MCF 10A (cell line): ENCODE measurements at regions of chr1 and their contacts with region 1.

Region 1: GRCh38 chr1:236103646-236104218 is 38.6 kb upstream of the GPR137B start:
- DNase-seq: peak; percentile 82
- H3K4me3 Mint-ChIP-seq: no peak overlapping the region
- H3K27ac Mint-ChIP-seq: no peak overlapping the region
- H3K4me1 Mint-ChIP-seq: peaks cover 7% of the 10 kb centered on the region
- H3K27me3 Mint-ChIP-seq: no peaks in the 10 kb centered on the region
- CTCF ChIP-seq: peak; percentile 99

Region 2: GRCh38 chr1:236051242-236051791 is 52.4 kb before region 1 on chr1:
- CTCF ChIA-PET with region 1: no interaction called
- POLR2A ChIA-PET with region 1: no interaction called
- intact Hi-C with region 1: no loop called
- DNase-seq: no peak
- H3K4me3 Mint-ChIP-seq: no peak overlapping the region
- H3K27ac Mint-ChIP-seq: no peak overlapping the region
- H3K4me1 Mint-ChIP-seq: no peaks in the 10 kb centered on the region
- H3K27me3 Mint-ChIP-seq: no peaks in the 10 kb centered on the region
- CTCF ChIP-seq: no peak

Region 3: DNA sequence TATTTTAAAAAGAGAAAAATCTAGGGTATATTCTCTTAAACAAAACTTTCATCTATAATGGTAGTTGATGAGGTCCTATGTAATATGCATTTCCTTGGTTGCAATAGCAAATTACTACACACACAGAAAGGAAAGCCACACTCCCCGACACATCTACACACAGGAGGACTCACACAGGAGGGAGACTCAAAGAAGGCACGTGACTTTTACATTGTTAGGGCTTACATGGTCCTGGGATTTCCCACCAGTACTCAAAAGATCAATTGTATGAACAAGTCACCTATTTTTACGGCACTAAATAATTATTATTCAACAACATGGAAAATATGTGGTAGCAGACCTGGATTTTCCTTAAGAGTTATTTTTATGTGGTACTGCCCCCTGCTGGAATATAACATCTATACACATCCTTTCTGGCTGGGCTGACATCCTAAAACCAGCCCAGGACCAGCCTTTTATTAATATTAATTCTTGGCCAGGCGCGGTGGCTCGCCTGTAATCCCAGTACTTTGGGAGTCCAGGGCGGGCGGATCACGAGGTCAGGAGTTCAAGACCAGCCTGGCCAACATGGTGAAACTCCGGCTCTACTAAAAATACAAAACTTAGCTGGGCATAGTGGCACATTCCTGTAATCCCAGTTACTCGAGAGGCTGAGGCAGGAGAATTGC is 386.1 kb after region 1 on chr1:
- CTCF ChIA-PET with region 1: interaction called, 376 read pairs
- POLR2A ChIA-PET with region 1: no interaction called
- intact Hi-C with region 1: loop called (anchors 1 kb)
- DNase-seq: peak; percentile 85
- H3K4me3 Mint-ChIP-seq: no peak overlapping the region
- H3K27ac Mint-ChIP-seq: no peak overlapping the region
- H3K4me1 Mint-ChIP-seq: no peaks in the 10 kb centered on the region
- H3K27me3 Mint-ChIP-seq: peaks cover 7% of the 10 kb centered on the region
- CTCF ChIP-seq: peak; percentile 86

Region 4: GRCh38 chr1:236502885-236503639 is 399.3 kb after region 1 on chr1:
- CTCF ChIA-PET with region 1: interaction called, 35 read pairs
- POLR2A ChIA-PET with region 1: no interaction called
- intact Hi-C with region 1: no loop called
- DNase-seq: peak; percentile 70
- H3K4me3 Mint-ChIP-seq: peak overlapping the region; percentile 12
- H3K27ac Mint-ChIP-seq: peak overlapping the region; percentile 47
- H3K4me1 Mint-ChIP-seq: peaks cover 16% of the 10 kb centered on the region
- H3K27me3 Mint-ChIP-seq: no peaks in the 10 kb centered on the region
- CTCF ChIP-seq: no peak

Region 5: DNA sequence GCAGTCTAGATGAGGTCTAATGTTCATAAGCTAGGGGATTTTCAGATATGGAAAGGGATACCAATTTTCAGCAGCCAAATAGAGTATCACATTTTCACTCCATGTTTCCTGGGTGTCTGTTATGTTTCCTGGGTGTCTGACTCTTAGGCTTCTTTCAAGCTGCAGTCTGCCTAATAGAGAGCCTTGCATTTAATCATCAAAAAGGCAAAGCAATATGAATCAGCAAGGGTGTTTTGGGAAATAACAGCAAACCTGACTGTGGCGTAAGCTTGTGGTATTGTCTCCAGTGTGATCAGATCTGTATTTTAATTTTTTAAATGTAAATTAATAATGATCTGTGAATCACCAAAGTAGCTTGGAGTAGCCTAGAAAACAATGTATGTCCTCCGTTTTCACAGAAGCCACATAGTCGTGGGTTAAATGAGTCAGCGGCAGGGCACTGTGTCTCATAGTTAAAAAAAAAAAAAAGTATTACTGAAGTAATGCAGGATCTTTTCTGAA is 430.5 kb after region 1 on chr1:
- CTCF ChIA-PET with region 1: interaction called, 74 read pairs
- POLR2A ChIA-PET with region 1: no interaction called
- intact Hi-C with region 1: no loop called
- DNase-seq: peak; percentile 22
- H3K4me3 Mint-ChIP-seq: no peak overlapping the region
- H3K27ac Mint-ChIP-seq: peak overlapping the region; percentile 9
- H3K4me1 Mint-ChIP-seq: peaks cover 34% of the 10 kb centered on the region
- H3K27me3 Mint-ChIP-seq: no peaks in the 10 kb centered on the region
- CTCF ChIP-seq: no peak

Region 6: DNA sequence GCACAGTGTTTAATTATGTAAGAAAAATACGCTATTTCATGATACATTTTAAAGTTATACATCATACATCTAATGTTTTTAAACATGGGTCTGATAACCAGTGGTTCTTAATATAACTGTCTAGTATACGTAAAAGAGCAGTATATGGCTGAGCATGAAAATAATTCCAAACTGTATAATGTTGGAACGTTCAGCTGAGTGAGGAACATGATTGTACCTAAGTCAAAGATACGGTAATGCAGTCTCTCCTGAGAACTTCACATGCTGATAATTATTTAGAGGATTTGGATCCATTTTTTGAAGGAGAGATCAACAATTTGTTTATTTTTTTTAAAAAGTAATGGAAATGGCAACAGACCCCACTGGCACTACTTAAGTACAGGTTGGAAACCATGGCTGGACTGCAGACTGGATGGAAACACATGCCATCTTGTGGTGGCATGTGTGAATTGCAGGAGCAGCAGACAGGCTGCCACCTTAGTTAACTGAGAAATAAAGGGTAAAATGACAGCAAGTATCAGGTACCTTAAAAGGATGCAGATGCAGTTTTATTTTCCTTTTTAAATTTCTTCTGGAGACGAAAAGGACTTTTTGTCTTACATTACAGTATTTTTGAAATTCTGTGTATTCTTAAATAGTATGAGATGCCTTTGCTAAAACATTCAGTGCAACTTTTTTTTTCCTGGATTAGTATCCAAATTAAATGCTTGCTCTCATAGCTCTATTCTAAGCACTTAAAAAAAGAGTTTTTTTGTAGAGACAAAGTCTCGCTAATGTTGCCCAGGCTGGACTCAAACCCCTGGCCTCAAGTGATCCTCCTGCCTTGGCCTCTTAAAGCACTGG is 765.1 kb after region 1 on chr1:
- CTCF ChIA-PET with region 1: interaction called, 4 read pairs
- POLR2A ChIA-PET with region 1: no interaction called
- intact Hi-C with region 1: loop called (anchors 1 kb)
- DNase-seq: peak; percentile 76
- H3K4me3 Mint-ChIP-seq: no peak overlapping the region
- H3K27ac Mint-ChIP-seq: no peak overlapping the region
- H3K4me1 Mint-ChIP-seq: peaks cover 5% of the 10 kb centered on the region
- H3K27me3 Mint-ChIP-seq: no peaks in the 10 kb centered on the region
- CTCF ChIP-seq: peak; percentile 99